MCF 10A (cell line): ENCODE measurements at regions of chr5 and their contacts with region 1.

Region 1: GRCh38 chr5:39376293-39376714 is 12.0 kb upstream of the C9 start:
- DNase-seq: peak; percentile 76
- H3K4me3 Mint-ChIP-seq: no peak overlapping the region
- H3K27ac Mint-ChIP-seq: no peak overlapping the region
- H3K4me1 Mint-ChIP-seq: no peaks in the 10 kb centered on the region
- H3K27me3 Mint-ChIP-seq: no peaks in the 10 kb centered on the region
- CTCF ChIP-seq: peak; percentile 70

Region 2: GRCh38 chr5:39355324-39355723 is 21.0 kb before region 1 on chr5:
- CTCF ChIA-PET with region 1: interaction called, 16 read pairs
- POLR2A ChIA-PET with region 1: no interaction called
- intact Hi-C with region 1: no loop called
- DNase-seq: no peak
- H3K4me3 Mint-ChIP-seq: no peak overlapping the region
- H3K27ac Mint-ChIP-seq: no peak overlapping the region
- H3K4me1 Mint-ChIP-seq: no peaks in the 10 kb centered on the region
- H3K27me3 Mint-ChIP-seq: no peaks in the 10 kb centered on the region
- CTCF ChIP-seq: no peak

Region 3: GRCh38 chr5:39399135-39400036 is 23.1 kb after region 1 on chr5:
- CTCF ChIA-PET with region 1: interaction called, 33 read pairs
- POLR2A ChIA-PET with region 1: interaction called, 8 read pairs
- intact Hi-C with region 1: no loop called
- DNase-seq: peak; percentile 94
- H3K4me3 Mint-ChIP-seq: no peak overlapping the region
- H3K27ac Mint-ChIP-seq: peak overlapping the region; percentile 88
- H3K4me1 Mint-ChIP-seq: peaks cover 23% of the 10 kb centered on the region
- H3K27me3 Mint-ChIP-seq: no peaks in the 10 kb centered on the region
- CTCF ChIP-seq: no peak

Region 4: DNA sequence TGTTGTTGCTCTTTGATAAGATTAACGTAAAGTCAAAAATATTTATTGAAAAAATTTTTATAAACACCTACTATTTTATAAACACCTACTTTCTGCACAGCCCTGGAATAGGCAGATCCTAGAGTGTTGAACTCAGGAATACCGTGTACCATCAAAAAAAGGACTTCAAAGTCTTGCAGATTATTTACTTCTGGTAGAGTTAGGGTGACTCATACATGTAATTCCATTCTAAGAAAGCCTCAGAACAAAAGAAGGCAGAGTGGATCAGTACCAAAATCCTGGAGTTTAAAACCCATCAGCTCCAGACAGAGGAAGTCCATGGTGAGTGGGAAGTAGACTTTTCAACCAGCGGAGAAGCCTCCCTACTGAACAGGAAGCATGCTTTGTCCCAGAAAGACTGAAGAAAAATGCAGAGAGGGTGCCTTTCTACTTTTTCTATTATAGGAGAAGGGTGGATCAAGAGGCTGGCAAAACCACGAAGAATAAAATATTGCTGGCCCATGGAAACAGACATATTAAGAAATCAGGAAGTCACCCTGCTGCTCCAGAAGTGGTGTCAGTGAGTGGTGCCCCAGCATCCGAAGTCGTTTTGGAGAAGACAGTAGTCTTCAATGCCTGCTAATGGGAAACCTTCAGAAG is 93.6 kb after region 1 on chr5:
- CTCF ChIA-PET with region 1: interaction called, 5 read pairs
- POLR2A ChIA-PET with region 1: no interaction called
- intact Hi-C with region 1: loop called (anchors 5 kb)
- DNase-seq: no peak
- H3K4me3 Mint-ChIP-seq: no peak overlapping the region
- H3K27ac Mint-ChIP-seq: no peak overlapping the region
- H3K4me1 Mint-ChIP-seq: no peaks in the 10 kb centered on the region
- H3K27me3 Mint-ChIP-seq: peaks cover under 1% of the 10 kb centered on the region
- CTCF ChIP-seq: no peak

Region 5: GRCh38 chr5:39506211-39506610 is 129.9 kb after region 1 on chr5:
- CTCF ChIA-PET with region 1: interaction called, 13 read pairs
- POLR2A ChIA-PET with region 1: no interaction called
- intact Hi-C with region 1: no loop called
- DNase-seq: no peak
- H3K4me3 Mint-ChIP-seq: no peak overlapping the region
- H3K27ac Mint-ChIP-seq: no peak overlapping the region
- H3K4me1 Mint-ChIP-seq: peaks cover 5% of the 10 kb centered on the region
- H3K27me3 Mint-ChIP-seq: no peaks in the 10 kb centered on the region
- CTCF ChIP-seq: no peak

Region 6: DNA sequence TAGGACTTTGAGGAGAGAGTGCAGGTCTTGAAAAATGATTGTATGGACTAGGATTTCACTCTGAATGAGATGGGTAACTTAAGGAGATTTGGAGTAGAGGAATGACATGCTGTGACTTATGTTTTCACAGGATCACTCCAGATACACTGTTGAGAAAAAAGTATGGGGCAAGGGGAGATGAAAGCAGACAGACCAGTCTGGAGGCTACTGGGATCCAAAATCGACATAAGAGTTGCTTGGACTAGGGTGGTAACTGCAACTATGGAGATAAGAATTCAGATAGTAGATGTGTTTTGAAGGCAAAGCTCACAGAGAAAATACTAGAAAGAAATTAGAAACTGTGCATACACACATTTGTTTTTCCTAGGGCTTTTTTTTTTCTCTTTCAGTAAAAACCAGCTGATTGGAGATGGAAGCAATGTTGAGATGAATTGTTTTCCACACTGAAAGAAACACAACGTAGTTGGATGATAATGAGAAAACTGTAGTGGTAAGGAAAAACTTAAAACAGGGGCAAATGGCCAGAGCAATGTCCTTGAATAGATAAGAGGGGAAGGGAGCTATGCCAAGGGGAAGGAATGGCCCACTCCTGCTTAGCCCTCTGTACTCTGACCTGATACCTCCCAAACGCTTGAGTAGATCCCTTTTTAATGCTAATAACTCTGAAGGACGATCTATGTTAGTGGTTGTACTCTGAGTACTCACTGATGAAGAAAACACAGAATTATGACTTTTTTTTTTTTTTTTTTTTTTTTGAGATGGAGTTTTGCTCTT is 163.0 kb after region 1 on chr5:
- CTCF ChIA-PET with region 1: interaction called, 355 read pairs
- POLR2A ChIA-PET with region 1: interaction called, 3 read pairs
- intact Hi-C with region 1: no loop called
- DNase-seq: no peak
- H3K4me3 Mint-ChIP-seq: no peak overlapping the region
- H3K27ac Mint-ChIP-seq: no peak overlapping the region
- H3K4me1 Mint-ChIP-seq: no peaks in the 10 kb centered on the region
- H3K27me3 Mint-ChIP-seq: peaks cover 28% of the 10 kb centered on the region
- CTCF ChIP-seq: no peak

Region 7: DNA sequence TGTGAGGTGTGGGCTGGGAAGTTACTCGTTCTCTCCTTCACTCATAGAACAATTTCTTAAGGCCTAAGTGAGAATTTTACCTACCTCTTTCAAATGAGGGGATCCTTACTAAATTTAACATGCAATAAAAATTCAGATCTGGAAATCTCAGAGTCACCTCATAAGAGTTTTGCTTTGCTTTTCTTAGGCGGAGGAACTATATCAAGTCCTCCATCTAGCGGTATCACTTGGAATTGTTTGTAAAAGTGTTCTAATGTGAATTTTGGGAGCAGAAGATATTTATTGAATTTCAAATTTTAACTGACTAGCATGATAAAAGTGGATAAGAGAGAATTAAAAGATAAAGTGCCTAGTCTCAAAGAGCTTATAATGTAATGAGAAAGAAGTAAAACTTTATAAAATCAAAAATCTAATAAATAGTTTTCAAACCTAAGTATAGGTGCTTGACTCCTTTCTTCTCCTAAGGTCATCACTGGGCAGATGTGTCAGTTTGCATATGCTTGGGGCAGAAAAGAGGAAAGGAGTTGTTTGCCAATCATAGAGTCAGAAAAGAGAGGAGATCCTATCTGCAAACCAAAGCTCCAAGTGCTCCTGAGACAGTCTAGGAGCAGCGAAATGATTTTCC is 194.2 kb after region 1 on chr5:
- CTCF ChIA-PET with region 1: interaction called, 134 read pairs
- POLR2A ChIA-PET with region 1: interaction called, 3 read pairs
- intact Hi-C with region 1: loop called (anchors 1 kb)
- DNase-seq: peak; percentile 44
- H3K4me3 Mint-ChIP-seq: no peak overlapping the region
- H3K27ac Mint-ChIP-seq: no peak overlapping the region
- H3K4me1 Mint-ChIP-seq: no peaks in the 10 kb centered on the region
- H3K27me3 Mint-ChIP-seq: no peaks in the 10 kb centered on the region
- CTCF ChIP-seq: peak; percentile 64

Region 8: GRCh38 chr5:39668980-39669379 is 292.7 kb after region 1 on chr5:
- CTCF ChIA-PET with region 1: no interaction called
- POLR2A ChIA-PET with region 1: no interaction called
- intact Hi-C with region 1: no loop called
- DNase-seq: no peak
- H3K4me3 Mint-ChIP-seq: no peak overlapping the region
- H3K27ac Mint-ChIP-seq: no peak overlapping the region
- H3K4me1 Mint-ChIP-seq: no peaks in the 10 kb centered on the region
- H3K27me3 Mint-ChIP-seq: no peaks in the 10 kb centered on the region
- CTCF ChIP-seq: no peak